Endothelial cell of umbilical vein (primary cell): ENCODE measurements at regions of chr11 and their contacts with region 1.

Region 1: GRCh38 chr11:106714199-106714598 is 304.1 kb downstream of the GUCY1A2 start:
- DNase-seq: no peak
- H3K4me3 ChIP-seq: no peak overlapping the region
- H3K27ac ChIP-seq: no peak overlapping the region
- H3K4me1 ChIP-seq: no peaks in the 10 kb centered on the region
- H3K27me3 ChIP-seq: no peaks in the 10 kb centered on the region
- CTCF ChIP-seq: no peak
- POLR2A ChIP-seq: no peak

Region 2: GRCh38 chr11:107017433-107018227 is 303.4 kb after region 1 on chr11:
- CTCF ChIA-PET with region 1: no interaction called
- POLR2A ChIA-PET with region 1: no interaction called
- dilution Hi-C with region 1: no loop called
- intact Hi-C with region 1: loop called (anchors 10 kb)
- DNase-seq: peak; percentile 7
- H3K4me3 ChIP-seq: peak overlapping the region; percentile 20 to 45 (median 23)
- H3K27ac ChIP-seq: no peak overlapping the region
- H3K4me1 ChIP-seq: peaks cover 4% of the 10 kb centered on the region
- H3K27me3 ChIP-seq: peaks cover 14 to 23% of the 10 kb centered on the region in 2 experiments
- CTCF ChIP-seq: peak; percentile 24 to 53
- POLR2A ChIP-seq: no peak